ENCODE measurements at regions of chr5 and their contacts with region 1.

Region 1: DNA sequence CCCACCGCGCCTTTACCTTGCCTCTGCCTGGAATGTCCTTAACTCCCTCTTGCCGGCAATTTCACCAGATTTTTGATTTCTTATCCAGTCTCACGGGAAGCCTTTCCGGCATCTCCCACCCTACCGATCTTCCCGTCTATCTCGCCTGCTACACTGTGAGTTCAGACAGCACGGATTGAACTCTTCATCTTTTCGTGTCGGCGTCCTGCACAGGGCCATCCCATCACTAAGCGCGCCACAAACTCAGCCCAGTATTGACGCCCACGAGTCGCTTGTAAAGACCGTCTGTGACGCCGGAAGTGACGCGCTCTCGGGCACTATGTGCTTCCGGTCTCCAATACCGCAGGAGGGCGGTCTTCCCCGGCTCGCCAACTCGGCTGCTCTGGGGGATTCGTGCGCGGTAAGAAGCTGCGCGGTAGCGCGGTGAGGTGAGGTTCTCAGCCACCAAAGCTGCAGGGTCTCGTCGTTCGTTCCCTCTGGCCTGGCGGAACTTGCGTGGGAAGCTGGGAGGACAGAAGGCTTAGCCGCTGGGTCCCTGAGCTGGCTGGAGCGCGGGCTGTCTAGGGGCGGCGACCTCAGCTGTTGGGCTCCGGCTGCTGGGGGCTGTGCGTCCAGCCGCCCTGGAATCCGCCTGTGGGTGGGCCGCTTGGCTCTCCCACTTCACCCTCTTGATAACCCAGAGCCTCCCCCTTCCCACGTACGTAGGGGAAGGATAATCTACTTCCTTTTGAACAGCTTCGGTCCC is at the start of gene ZCCHC9:
- DNase-seq: peak; percentile 96
- H3K4me3 Mint-ChIP-seq: peak within 1 kb of the TSS; percentile 87
- H3K27ac Mint-ChIP-seq: peak within 1 kb of the TSS; percentile 88
- H3K4me1 Mint-ChIP-seq: peaks cover 44% of the 10 kb centered on the region
- H3K27me3 Mint-ChIP-seq: no peaks in the 10 kb centered on the region
- total RNA-seq, gene ZCCHC9: 31.8 to 33.5 TPM

Region 2: GRCh38 chr5:80487829-80488721 is 813.4 kb before region 1 on chr5 and contains the start of gene FAM151B:
- CTCF ChIA-PET with region 1: no interaction called
- intact Hi-C with region 1: loop called (anchors 1 kb)
- DNase-seq: peak; percentile 85
- H3K4me3 Mint-ChIP-seq: peak within 1 kb of the TSS; percentile 79
- H3K27ac Mint-ChIP-seq: no peak within 1 kb of the TSS
- H3K4me1 Mint-ChIP-seq: peaks cover 13% of the 10 kb centered on the region
- H3K27me3 Mint-ChIP-seq: no peaks in the 10 kb centered on the region
- total RNA-seq, gene FAM151B: 0.15 to 0.36 TPM

Region 3: DNA sequence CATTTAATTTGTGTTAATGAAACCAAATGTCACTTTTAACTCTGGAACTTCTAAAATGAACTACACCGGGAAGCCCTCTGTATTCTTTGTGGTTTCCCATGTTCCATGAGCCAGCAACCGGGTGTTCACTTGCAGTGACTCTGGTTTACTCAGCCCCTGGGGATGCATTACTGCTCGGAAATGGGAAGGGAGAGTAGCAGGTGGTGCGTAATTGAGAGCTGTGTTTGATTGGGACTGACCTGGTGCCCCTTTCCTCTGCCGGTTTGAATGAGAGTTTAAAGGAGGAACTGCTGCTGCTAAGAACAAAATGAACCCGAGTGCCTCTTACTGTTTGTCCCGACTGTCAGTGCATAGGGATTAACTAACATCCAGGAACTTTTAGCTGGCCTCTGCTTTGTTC is 546.5 kb before region 1 on chr5:
- CTCF ChIA-PET with region 1: no interaction called
- intact Hi-C with region 1: loop called (anchors 2 kb)
- DNase-seq: peak; percentile 81
- H3K4me3 Mint-ChIP-seq: peak overlapping the region; percentile 32
- H3K27ac Mint-ChIP-seq: peak overlapping the region; percentile 43
- H3K4me1 Mint-ChIP-seq: peaks cover 54% of the 10 kb centered on the region
- H3K27me3 Mint-ChIP-seq: no peaks in the 10 kb centered on the region

Region 4: DNA sequence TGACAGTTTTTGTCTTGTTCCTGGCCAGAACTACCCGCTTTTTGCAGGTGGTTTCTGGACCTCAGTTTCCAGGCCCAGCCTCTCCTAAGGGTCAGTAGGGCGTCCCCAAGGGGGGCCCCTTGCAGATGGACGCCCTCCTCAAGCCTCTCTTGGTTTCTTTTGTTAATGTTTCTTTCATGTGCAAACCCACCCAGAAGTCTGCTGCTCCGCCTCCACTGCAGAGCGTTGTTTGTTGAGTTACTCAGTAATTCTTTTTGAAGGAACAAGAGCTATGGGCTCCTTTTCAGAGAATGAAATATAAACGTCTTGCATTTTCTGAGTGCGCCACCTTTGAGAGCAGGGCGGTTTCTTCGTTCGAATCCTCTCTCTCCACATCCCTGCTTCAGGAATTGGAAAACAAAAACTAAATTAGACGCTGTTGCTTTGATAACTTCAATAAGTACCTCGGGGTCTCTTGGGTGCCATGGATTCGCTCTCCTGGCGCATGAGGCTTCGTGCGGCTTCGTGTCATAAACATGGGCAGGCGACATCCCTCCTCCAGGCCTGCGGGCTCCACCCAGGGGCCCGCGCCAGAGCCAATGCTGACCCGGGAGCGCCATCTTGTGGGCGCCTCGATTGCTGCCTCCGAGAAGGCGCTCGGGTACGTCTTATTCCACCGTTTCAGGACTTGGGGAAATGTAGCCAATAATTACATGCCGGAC is 106.7 kb before region 1 on chr5:
- CTCF ChIA-PET with region 1: interaction called, 9 read pairs
- intact Hi-C with region 1: loop called (anchors 2 kb)
- DNase-seq: peak; percentile 88
- H3K4me3 Mint-ChIP-seq: peak overlapping the region; percentile 51
- H3K27ac Mint-ChIP-seq: no peak overlapping the region
- H3K4me1 Mint-ChIP-seq: peaks cover 8% of the 10 kb centered on the region
- H3K27me3 Mint-ChIP-seq: no peaks in the 10 kb centered on the region

Region 5: DNA sequence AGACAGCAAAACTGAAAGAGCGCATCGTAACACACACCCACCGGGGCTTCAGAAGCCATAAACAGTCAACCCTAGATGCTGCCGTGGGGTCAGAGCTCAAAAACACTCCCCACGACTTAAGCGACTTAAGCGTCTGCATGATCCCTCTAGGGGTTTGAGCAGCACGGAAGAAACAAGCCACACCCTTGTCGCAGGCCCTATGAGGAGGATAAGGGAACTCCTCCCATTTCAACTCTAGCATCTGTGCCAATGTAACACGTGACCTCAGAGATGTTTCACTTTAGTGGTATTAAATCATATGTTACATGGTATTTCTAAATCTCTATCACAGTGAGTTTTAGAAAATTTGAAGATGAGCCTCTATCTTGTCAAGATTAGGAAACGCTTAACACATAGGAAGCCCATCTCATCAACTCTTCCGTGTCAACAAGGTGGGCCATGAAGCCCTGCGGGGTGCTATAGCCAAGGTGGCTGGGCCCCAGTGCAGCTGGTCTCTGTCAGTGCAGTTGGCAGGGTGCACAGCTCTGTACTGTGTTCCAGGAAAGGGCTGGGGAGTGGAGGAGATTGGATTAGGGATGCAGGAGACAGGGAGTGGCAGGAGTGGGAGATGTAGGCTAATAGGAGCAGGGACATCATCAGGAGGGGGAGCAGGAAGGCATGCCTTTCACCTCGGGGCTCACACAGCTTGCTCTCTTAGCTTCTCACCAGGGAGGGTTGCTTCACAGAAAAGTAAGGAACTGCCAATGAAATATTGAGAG is 33.0 kb after region 1 on chr5:
- CTCF ChIA-PET with region 1: no interaction called
- intact Hi-C with region 1: no loop called
- DNase-seq: no peak
- H3K4me3 Mint-ChIP-seq: no peak overlapping the region
- H3K27ac Mint-ChIP-seq: no peak overlapping the region
- H3K4me1 Mint-ChIP-seq: no peaks in the 10 kb centered on the region
- H3K27me3 Mint-ChIP-seq: no peaks in the 10 kb centered on the region

Region 6: DNA sequence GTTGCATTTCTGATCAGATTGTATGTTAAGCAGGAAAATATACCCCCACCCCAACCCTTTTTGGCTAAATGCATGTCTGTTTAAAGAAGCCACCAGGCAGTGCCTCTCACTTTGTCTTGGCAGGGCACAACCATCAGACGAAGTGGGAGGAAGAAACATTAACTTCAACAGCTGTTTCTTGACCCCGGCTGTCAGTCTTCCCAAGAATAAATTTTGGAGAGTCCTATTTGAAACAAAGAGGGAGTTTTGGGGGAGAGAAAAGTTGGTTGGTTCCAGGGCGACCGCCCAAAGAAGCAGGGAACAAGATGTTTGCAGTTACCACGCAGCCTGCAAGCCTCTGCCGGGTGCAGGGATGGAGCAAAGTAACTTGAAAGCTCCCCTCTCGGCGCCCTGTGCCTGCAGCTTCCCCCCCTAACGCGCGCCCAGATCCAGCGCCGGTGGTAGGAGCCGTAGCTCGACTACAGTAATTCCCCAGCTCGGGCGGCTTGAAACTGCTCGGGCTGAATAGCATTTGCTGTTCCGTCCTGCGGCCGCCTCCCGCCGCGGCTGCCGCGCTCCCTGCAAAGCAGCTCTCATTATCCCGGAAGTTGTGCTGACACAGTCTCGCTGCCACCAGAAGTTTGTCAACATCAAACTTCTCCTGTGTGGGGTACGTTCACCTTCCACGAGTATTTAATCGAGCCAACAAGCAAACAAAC is 550.2 kb after region 1 on chr5:
- CTCF ChIA-PET with region 1: no interaction called
- intact Hi-C with region 1: loop called (anchors 2 kb)
- DNase-seq: peak; percentile 91
- H3K4me3 Mint-ChIP-seq: peak overlapping the region; percentile 86
- H3K27ac Mint-ChIP-seq: peak overlapping the region; percentile 92
- H3K4me1 Mint-ChIP-seq: peaks cover 40% of the 10 kb centered on the region
- H3K27me3 Mint-ChIP-seq: no peaks in the 10 kb centered on the region

Region 7: GRCh38 chr5:82225525-82226172 is 924.2 kb after region 1 on chr5:
- CTCF ChIA-PET with region 1: interaction called, 8 read pairs
- intact Hi-C with region 1: loop called (anchors 2 kb)
- DNase-seq: peak; percentile 79
- H3K4me3 Mint-ChIP-seq: no peak overlapping the region
- H3K27ac Mint-ChIP-seq: no peak overlapping the region
- H3K4me1 Mint-ChIP-seq: peaks cover 3% of the 10 kb centered on the region
- H3K27me3 Mint-ChIP-seq: no peaks in the 10 kb centered on the region

Region 8: GRCh38 chr5:83076742-83077661 is 1775.6 kb after region 1 on chr5 and contains the starts of genes TMEM167A and XRCC4:
- CTCF ChIA-PET with region 1: no interaction called
- intact Hi-C with region 1: loop called (anchors 2 kb)
- DNase-seq: peak; percentile 95
- H3K4me3 Mint-ChIP-seq: peak within 1 kb of the TSS; percentile 98
- H3K27ac Mint-ChIP-seq: peak within 1 kb of the TSS; percentile 96
- H3K4me1 Mint-ChIP-seq: peaks cover 48% of the 10 kb centered on the region
- H3K27me3 Mint-ChIP-seq: no peaks in the 10 kb centered on the region
- total RNA-seq, gene TMEM167A: 58.8 to 64.4 TPM
- total RNA-seq, gene XRCC4: 12.1 to 12.8 TPM